ENCODE measurements at regions of chr3 and their contacts with region 1.

Region 1: DNA sequence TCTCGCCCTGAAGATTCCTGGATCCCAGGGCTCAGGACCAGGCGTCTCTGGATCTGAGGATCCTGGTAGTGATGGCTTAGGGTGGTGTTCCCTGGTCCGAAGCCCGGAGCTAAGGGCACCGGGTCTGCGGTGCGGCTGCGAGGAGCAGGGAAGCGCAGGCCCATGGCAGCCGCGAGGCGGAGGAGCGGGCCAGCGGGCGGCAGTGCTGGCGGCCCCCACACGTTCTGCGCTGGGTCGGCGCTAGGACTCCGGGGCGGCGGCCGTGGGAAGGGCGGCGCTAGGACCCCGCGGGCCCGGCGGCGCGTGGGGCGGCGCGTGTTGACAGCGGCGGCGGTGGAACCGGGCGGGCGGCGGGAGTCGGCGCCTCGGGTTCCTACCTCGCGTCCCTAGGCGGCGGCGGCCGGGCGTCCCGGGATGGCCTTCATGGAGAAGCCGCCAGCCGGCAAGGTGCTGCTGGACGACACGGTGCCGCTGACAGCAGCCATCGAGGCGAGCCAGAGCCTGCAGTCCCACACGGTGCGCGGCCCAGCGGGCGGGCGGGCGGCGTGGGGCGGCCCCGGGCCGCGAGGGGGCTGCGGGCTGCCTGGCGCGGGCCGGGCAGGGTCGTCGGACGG is at the start of gene PXK:
- DNase-seq: peak; percentile 76 to 96 (median 83)
- H3K4me3 ChIP-seq: peak within 1 kb of the TSS; percentile 57 to 95 (median 82)
- H3K27ac ChIP-seq: peak within 1 kb of the TSS; percentile 71 to 99 (median 93)
- H3K27me3 ChIP-seq: no peaks in the 10 kb centered on the region
- CTCF ChIP-seq: peak in 48 of 56 donors; percentile 10 to 65 (median 44)
- total RNA-seq, gene PXK: 55.2 to 497 (median 130) TPM

Region 2: GRCh38 chr3:58305882-58306711 is 26.6 kb before region 1 on chr3 and contains the starts of genes HTD2 and RPP14:
- intact Hi-C with region 1: loop called in 1 of 2 experiments (anchors 2 kb)
- DNase-seq: peak; percentile 95 to 99 (median 98)
- H3K4me3 ChIP-seq: peak within 1 kb of the TSS; percentile 59 to 98 (median 86)
- H3K27ac ChIP-seq: peak within 1 kb of the TSS; percentile 83 to 100 (median 99)
- H3K27me3 ChIP-seq: no peaks in the 10 kb centered on the region
- CTCF ChIP-seq: peak; percentile 94 to 100 (median 98)
- total RNA-seq, gene HTD2: 5.0 to 23.1 (median 11.3) TPM
- total RNA-seq, gene RPP14: 10.7 to 30.0 (median 19.1) TPM

Region 3: GRCh38 chr3:58386626-58387365 is 54.1 kb after region 1 on chr3:
- intact Hi-C with region 1: loop called (anchors 1 to 2 kb)
- DNase-seq: peak; percentile 23 to 92 (median 82)
- H3K4me3 ChIP-seq: peak overlapping the region in 8 of 59 donors; percentile 4 to 43 (median 14)
- H3K27ac ChIP-seq: peak overlapping the region; percentile 3 to 100 (median 97)
- H3K27me3 ChIP-seq: no peaks in the 10 kb centered on the region
- CTCF ChIP-seq: peak in 14 of 56 donors; percentile 7 to 48 (median 20)

Region 4: GRCh38 chr3:58414538-58415197 is 82.0 kb after region 1 on chr3:
- intact Hi-C with region 1: loop called (anchors 1 to 5 kb)
- DNase-seq: peak in 2 of 10 donors; percentile 35 to 41
- H3K4me3 ChIP-seq: no peak overlapping the region
- H3K27ac ChIP-seq: peak overlapping the region in 54 of 59 donors; percentile 1 to 93 (median 72)
- H3K27me3 ChIP-seq: no peaks in the 10 kb centered on the region
- CTCF ChIP-seq: peak; percentile 64 to 92 (median 83)

Region 5: GRCh38 chr3:58433400-58434169 is 100.9 kb after region 1 on chr3 and contains the start of gene PDHB:
- intact Hi-C with region 1: loop called (anchors 1 to 5 kb)
- DNase-seq: peak; percentile 86 to 95 (median 90)
- H3K4me3 ChIP-seq: peak within 1 kb of the TSS; percentile 51 to 97 (median 82)
- H3K27ac ChIP-seq: peak within 1 kb of the TSS; percentile 81 to 100 (median 97)
- H3K27me3 ChIP-seq: no peaks in the 10 kb centered on the region
- CTCF ChIP-seq: peak in 34 of 56 donors; percentile 1 to 53 (median 27)
- total RNA-seq, gene PDHB: 33.2 to 82.3 (median 62.6) TPM

Region 6: DNA sequence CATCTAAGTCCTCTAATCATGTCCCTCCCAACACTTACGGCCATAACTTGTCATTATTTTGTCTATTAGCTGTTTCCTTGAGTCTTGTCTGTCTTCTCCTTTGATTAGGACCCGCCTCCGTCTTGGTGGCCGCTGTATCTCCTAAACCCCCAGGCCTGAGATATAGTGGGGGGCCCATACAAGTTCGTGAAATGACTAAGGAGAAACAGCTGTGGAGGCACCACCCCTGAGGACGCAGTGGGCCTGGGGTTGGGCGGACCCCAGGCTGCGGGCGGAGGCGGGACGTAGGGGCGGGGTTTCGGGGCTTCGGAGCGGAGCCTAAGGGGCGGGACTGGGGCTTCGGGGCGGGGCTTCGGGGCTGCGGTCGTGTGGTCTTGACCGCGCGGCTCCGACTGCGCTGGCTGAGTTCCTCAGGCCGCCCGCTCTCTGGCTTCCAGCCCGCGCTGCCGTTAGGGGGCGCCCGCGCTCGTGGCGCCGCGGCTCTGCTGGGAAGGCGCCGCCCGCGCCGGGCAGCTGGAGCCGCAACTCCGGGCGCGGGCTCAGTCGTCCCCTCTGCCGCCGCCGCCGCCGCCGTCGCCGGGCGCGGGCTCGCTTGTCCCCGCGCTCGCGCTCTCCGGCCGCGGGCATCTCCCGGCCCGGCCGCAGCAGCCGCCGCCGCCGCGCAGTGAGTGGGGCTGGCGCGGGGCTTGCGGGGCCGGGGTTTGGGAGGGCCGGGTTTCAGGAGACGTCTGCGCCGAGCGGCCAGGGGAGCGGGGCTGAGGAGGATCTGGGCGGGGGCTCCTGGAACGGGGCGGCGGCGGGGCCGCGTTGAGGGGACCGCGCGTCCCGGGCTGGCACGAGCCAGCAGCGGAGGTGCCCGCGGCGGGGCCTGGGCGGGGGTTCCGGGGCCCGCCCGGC is 159.1 kb after region 1 on chr3 and contains the start of gene KCTD6:
- intact Hi-C with region 1: loop called (anchors 1 to 5 kb)
- DNase-seq: peak; percentile 75 to 94 (median 82)
- H3K4me3 ChIP-seq: peak within 1 kb of the TSS; percentile 55 to 94 (median 84)
- H3K27ac ChIP-seq: peak within 1 kb of the TSS; percentile 60 to 93 (median 85)
- H3K27me3 ChIP-seq: no peaks in the 10 kb centered on the region
- CTCF ChIP-seq: peak in 55 of 56 donors; percentile 46 to 90 (median 71)
- total RNA-seq, gene KCTD6: 21.0 to 44.7 (median 30.4) TPM